ENCODE measurements at regions of chr7 and their contacts with region 1.

Region 1: DNA sequence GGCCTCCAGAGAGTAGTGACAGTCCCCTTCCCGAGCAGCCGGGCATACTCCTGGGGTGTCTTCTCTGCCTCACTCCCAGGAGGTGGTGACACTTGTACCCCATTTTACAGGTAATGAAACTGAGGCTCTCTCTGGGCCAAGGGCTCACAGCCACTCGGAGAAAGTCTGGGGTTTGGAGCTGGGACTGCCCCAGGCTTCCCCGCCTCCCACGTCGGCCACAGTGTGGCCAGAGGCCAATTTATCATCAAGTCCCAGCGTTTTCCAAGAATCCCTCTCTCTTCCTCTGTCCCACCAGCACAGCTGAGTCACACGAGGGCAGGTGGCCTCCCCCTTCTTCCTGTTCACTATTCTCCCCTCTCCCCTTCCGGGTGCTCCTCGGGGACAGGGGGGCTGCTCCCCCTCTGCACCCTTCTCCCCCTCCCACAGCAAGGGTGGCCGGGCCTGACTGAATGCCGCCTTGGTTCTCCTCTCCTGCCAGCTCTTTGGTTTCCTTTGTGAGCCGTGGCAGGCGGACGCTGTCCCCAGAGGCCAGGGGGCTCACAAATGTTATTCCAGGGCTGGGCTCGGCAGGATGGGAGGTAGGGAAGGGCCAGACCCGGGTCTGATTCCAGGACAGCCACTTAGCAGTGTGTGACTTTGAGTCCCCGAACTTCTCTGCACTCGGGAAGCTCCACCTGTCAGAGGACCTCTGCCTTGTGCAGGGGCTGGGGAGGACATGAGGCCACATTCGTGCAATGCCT is 17.7 kb downstream of the CLIP2 start:
- DNase-seq: peak; percentile 58 to 73 (median 65)
- H3K4me3 ChIP-seq: no peak overlapping the region
- H3K27ac ChIP-seq: no peak overlapping the region
- H3K4me1 ChIP-seq: peaks cover 16% of the 10 kb centered on the region
- H3K27me3 ChIP-seq: no peaks in the 10 kb centered on the region
- CTCF ChIP-seq: no peak
- EP300 ChIP-seq: no peak
- POLR2A ChIP-seq: no peak

Region 2: GRCh38 chr7:74226633-74227032 is 80.3 kb before region 1 on chr7:
- intact Hi-C with region 1: no loop called
- DNase-seq: no peak
- H3K4me3 ChIP-seq: no peak overlapping the region
- H3K27ac ChIP-seq: no peak overlapping the region
- H3K4me1 ChIP-seq: peaks cover 5% of the 10 kb centered on the region
- H3K27me3 ChIP-seq: no peaks in the 10 kb centered on the region
- CTCF ChIP-seq: no peak
- EP300 ChIP-seq: no peak
- POLR2A ChIP-seq: no peak

Region 3: DNA sequence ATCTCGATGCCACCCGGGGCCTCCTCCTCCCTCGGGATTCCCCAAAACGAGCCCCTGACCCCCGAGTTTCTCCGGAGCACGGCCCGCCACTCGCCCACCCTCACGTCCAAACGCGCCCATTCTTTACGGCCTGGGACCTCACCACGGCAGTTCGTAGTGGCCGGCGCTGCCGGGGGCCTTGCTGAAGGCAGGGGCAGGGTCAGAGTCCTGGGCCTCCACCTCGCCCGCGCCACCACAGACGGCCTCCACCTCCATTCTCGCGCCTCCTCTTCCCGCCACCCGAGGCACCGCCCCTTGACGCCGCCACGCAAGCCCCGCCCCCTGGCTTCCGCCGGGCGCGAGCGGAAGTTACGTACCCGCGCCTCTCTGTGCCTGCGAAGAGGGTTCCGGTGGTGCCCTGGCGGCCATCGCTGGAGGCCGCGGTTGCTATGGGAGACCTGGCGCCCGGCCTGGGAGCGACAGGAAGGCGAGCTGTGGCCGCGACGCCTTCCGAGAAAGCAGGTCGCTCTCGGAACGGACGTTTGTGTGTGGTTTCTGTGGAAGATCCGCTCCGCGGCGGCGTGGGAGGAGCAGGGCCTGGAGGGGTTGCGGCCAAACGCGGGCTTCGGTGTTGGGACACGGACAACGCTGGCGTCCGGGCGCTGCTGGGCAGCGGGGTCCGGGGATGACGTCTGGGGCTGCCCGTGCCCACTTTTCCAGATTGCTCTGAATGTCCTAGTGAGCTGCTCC is 52.6 kb before region 1 on chr7 and contains the start of gene RFC2:
- intact Hi-C with region 1: loop called in 1 of 4 experiments (anchors 5 kb)
- DNase-seq: peak; percentile 94 to 99 (median 97)
- H3K4me3 ChIP-seq: peak within 1 kb of the TSS; percentile 79
- H3K27ac ChIP-seq: peak within 1 kb of the TSS; percentile 18 to 84
- H3K4me1 ChIP-seq: peaks cover 5% of the 10 kb centered on the region
- H3K27me3 ChIP-seq: no peaks in the 10 kb centered on the region
- CTCF ChIP-seq: peak; percentile 24 to 87 (median 85)
- EP300 ChIP-seq: peak; percentile 89
- POLR2A ChIP-seq: peak; percentile 92
- total RNA-seq, gene RFC2: 6.4 to 20.3 (median 14.1) TPM

Measured in ovary (tissue), 10 donors.